Calu3 (cell line): ENCODE measurements at regions of chr17 and their contacts with region 1.

Region 1: GRCh38 chr17:40559954-40560591 is 5.2 kb downstream of the CCR7 start:
- DNase-seq: peak; percentile 100
- H3K4me3 Mint-ChIP-seq: peak overlapping the region; percentile 47
- H3K27ac Mint-ChIP-seq: no peak overlapping the region
- H3K4me1 Mint-ChIP-seq: peaks cover 17% of the 10 kb centered on the region
- H3K27me3 Mint-ChIP-seq: peaks cover 99% of the 10 kb centered on the region
- CTCF ChIP-seq: no peak

Region 2: GRCh38 chr17:40191237-40192208 is 368.6 kb before region 1 on chr17:
- CTCF ChIA-PET with region 1: no interaction called
- intact Hi-C with region 1: no loop called
- DNase-seq: no peak
- H3K4me3 Mint-ChIP-seq: no peak overlapping the region
- H3K27ac Mint-ChIP-seq: no peak overlapping the region
- H3K4me1 Mint-ChIP-seq: no peaks in the 10 kb centered on the region
- H3K27me3 Mint-ChIP-seq: no peaks in the 10 kb centered on the region
- CTCF ChIP-seq: no peak

Region 3: GRCh38 chr17:40399185-40399584 is 160.9 kb before region 1 on chr17:
- CTCF ChIA-PET with region 1: interaction called, 12 read pairs
- intact Hi-C with region 1: loop called (anchors 1 kb)
- DNase-seq: no peak
- H3K4me3 Mint-ChIP-seq: no peak overlapping the region
- H3K27ac Mint-ChIP-seq: no peak overlapping the region
- H3K4me1 Mint-ChIP-seq: no peaks in the 10 kb centered on the region
- H3K27me3 Mint-ChIP-seq: no peaks in the 10 kb centered on the region
- CTCF ChIP-seq: no peak

Region 4: GRCh38 chr17:40480501-40481003 is 79.5 kb before region 1 on chr17:
- CTCF ChIA-PET with region 1: interaction called, 4,142 read pairs
- intact Hi-C with region 1: loop called (anchors 1 kb)
- DNase-seq: peak; percentile 91
- H3K4me3 Mint-ChIP-seq: no peak overlapping the region
- H3K27ac Mint-ChIP-seq: no peak overlapping the region
- H3K4me1 Mint-ChIP-seq: peaks cover 25% of the 10 kb centered on the region
- H3K27me3 Mint-ChIP-seq: peaks cover 36% of the 10 kb centered on the region
- CTCF ChIP-seq: no peak

Region 5: GRCh38 chr17:40510328-40510648 is 49.8 kb before region 1 on chr17:
- CTCF ChIA-PET with region 1: interaction called, 64 read pairs
- intact Hi-C with region 1: no loop called
- DNase-seq: peak; percentile 88
- H3K4me3 Mint-ChIP-seq: no peak overlapping the region
- H3K27ac Mint-ChIP-seq: no peak overlapping the region
- H3K4me1 Mint-ChIP-seq: peaks cover 41% of the 10 kb centered on the region
- H3K27me3 Mint-ChIP-seq: peaks cover 61% of the 10 kb centered on the region
- CTCF ChIP-seq: no peak

Region 6: GRCh38 chr17:40542558-40543411 is 17.3 kb before region 1 on chr17:
- CTCF ChIA-PET with region 1: interaction called, 1,743 read pairs
- intact Hi-C with region 1: no loop called
- DNase-seq: no peak
- H3K4me3 Mint-ChIP-seq: no peak overlapping the region
- H3K27ac Mint-ChIP-seq: no peak overlapping the region
- H3K4me1 Mint-ChIP-seq: no peaks in the 10 kb centered on the region
- H3K27me3 Mint-ChIP-seq: peaks cover 50% of the 10 kb centered on the region
- CTCF ChIP-seq: no peak

Region 7: DNA sequence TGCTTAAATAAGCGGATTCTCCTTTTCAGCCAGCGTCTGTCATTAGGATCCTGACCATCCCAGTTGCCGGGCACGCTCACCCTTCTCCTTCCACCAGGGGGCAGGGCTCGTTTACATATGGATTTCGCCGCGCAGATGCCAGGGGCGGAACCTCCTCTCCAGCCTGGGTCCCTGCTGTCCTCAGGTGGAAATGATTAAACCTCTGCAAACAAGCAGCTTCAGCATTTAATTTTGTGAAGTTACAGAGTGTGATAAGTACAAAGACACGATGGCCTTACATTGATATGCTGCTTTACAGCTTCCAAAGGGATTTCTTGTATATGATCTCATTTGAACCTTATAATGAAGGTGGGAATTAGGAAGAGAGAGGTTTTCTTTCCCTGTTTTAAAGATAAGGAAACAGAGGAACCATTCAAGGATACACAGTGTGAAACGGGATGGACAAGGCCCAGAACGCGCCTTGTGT is 243.6 kb after region 1 on chr17:
- CTCF ChIA-PET with region 1: interaction called, 3 read pairs
- intact Hi-C with region 1: loop called (anchors 1 kb)
- DNase-seq: peak; percentile 100
- H3K4me3 Mint-ChIP-seq: no peak overlapping the region
- H3K27ac Mint-ChIP-seq: no peak overlapping the region
- H3K4me1 Mint-ChIP-seq: no peaks in the 10 kb centered on the region
- H3K27me3 Mint-ChIP-seq: peaks cover 38% of the 10 kb centered on the region
- CTCF ChIP-seq: peak; percentile 100